ENCODE measurements at regions of chr6 and their contacts with region 1.

Region 1: DNA sequence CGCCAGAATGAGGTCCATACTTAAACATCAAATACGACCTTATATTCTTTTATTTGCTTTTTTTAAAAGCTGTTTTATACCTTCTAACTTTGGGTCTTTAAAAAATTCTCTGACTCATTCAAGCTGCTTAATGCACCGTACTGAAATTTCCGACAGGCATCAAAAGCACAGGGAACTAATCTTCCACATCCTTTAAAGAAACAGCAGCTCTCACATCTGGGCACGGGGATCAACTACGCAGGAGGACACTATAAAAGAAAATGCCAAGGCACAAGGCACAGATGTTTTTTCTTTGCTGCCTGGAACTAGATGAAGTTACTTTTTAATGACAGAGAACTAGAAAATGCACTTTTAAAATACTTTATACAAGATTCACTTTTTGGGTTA is 112.4 kb upstream of the ARG1 start:
- DNase-seq: no peak
- ATAC-seq: no peak
- H3K4me3 ChIP-seq: no peak overlapping the region
- H3K4me3 Mint-ChIP-seq: no peak overlapping the region
- H3K27ac ChIP-seq: no peak overlapping the region
- H3K27ac Mint-ChIP-seq: peak overlapping the region in 2 of 9 donors; percentile 51 to 58
- H3K4me1 ChIP-seq: peaks cover 0 to 4% of the 10 kb centered on the region in 2 donors
- H3K4me1 Mint-ChIP-seq: peaks cover 0 to 10% (median 6%) of the 10 kb centered on the region in 7 donors
- H3K27me3 ChIP-seq: no peaks in the 10 kb centered on the region
- H3K27me3 Mint-ChIP-seq: no peaks in the 10 kb centered on the region

Region 2: DNA sequence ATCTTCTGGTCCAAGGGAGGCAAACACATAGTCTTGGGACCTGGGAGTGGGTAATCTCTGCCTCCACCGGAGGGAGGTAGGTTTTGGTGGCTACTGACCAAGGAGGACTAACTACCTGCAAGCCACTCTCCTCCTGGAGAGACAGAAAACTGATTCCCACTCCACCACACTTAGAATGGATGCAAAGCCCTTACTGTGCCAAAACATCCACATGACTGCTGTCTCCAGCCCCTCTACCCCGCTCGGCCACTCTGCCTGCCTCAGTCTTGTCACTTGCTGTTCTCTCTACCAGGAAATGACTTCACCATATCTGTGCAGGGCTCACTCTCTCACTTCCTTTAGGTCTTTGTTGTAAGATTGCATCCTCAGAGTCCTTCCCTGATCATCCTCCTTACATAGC is 17.1 kb before region 1 on chr6:
- CTCF ChIA-PET with region 1: interaction called, 4 read pairs
- POLR2A ChIA-PET with region 1: no interaction called
- intact Hi-C with region 1: loop called in 1 of 2 experiments (anchors 2 kb)
- DNase-seq: peak in 7 of 9 donors; percentile 38 to 53 (median 49)
- ATAC-seq: peak; percentile 80
- H3K4me3 ChIP-seq: peak overlapping the region; percentile 70
- H3K4me3 Mint-ChIP-seq: peak overlapping the region; percentile 82 to 97 (median 92)
- H3K27ac ChIP-seq: peak overlapping the region; percentile 60
- H3K27ac Mint-ChIP-seq: peak overlapping the region; percentile 85 to 97 (median 93)
- H3K4me1 ChIP-seq: peaks cover 0 to 18% of the 10 kb centered on the region in 2 donors
- H3K4me1 Mint-ChIP-seq: peaks cover 23 to 91% (median 75%) of the 10 kb centered on the region in 7 donors
- H3K27me3 ChIP-seq: no peaks in the 10 kb centered on the region
- H3K27me3 Mint-ChIP-seq: no peaks in the 10 kb centered on the region